Activated B cell treated with CpG ODN at 0.5 μM for 24 hours (primary cell): ENCODE measurements at regions of chr6 and their contacts with region 1.

Region 1: DNA sequence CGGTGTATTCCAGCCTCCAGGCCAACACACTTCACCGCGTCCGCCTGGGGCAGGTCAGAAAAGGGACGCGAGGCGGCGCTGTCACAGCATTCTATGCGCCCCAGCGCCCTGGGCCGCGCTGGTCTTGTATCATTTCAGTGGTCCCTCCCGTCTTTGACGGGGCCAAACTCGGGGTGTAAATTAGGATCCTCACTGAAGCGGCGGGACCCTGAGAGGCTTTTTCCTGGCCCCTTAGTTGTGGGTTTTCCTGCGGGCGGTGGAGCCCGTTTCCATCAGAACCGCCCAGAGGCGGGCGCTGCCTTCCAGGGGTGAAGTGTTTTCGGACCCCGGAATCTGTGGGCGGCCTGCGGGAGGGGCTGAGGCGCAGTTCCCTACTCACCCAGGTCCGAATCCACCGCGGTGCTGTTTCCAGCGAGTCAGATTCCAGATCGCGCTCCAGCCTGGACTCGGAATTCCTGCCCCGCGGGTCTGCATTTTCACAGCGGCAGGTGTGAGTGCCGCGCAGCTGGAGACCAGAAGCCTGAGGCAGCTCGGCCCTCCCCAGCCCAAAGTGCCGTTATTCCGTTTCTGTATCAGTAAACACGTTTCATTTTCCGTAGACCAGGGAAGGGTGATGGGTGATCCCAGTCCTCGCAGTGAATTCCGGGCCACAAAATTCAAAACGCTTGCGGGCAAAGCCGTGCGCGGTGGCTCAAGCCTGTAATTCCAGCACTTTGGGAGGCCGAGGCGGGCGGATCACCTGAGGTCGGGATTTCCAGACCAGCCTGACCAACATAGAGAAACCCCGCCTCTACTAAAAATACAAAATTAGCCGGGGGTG is 3.9 kb upstream of the MICB start:
- DNase-seq: peak; percentile 76
- ATAC-seq: peak; percentile 48
- H3K4me3 Mint-ChIP-seq: peak overlapping the region; percentile 90
- H3K27ac Mint-ChIP-seq: peak overlapping the region; percentile 92
- H3K4me1 Mint-ChIP-seq: peaks cover 54% of the 10 kb centered on the region
- H3K27me3 Mint-ChIP-seq: no peaks in the 10 kb centered on the region
- CTCF ChIP-seq: no peak

Region 2: DNA sequence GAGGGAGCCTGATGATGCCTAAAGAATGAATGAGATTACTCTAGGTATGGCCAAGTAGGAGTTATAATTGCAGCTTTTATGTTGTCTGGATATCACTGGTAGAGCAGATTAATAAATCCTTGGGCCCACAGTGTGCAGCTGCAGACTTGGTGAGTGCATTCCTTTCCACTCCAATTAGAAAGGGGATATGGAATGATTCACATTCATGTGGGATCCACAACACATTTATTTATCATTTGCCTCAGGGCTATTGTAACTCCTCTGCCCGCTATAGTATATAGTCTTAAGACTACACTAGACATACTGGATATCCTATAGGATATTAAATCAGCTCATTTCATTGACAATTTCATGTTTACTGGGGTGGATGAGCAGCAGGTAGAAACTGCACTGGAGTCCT is 1678.1 kb before region 1 on chr6:
- CTCF ChIA-PET with region 1: no interaction called
- POLR2A ChIA-PET with region 1: no interaction called
- intact Hi-C with region 1: no loop called
- DNase-seq: no peak
- ATAC-seq: no peak
- H3K4me3 Mint-ChIP-seq: no peak overlapping the region
- H3K27ac Mint-ChIP-seq: no peak overlapping the region
- H3K4me1 Mint-ChIP-seq: no peaks in the 10 kb centered on the region
- H3K27me3 Mint-ChIP-seq: peaks cover 30% of the 10 kb centered on the region
- CTCF ChIP-seq: no peak

Region 3: DNA sequence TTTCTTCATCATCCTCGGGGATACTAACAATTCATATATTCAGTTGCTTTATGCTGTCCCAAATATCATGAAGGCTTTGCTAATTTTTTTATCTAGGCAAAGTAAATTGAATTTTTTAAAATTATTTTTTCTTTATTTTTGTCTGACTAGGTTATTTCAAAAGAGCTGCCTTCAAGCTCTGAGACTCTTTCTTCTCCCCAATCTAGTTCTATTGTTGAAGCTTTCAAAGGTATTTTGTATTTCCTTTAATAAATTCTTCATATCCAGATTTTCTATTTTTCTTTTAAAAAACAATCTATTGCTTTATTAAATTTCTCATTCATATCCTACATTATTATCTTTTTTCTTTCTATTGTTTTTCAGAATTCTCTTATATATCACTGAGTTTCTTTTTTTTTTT is 1313.9 kb before region 1 on chr6:
- CTCF ChIA-PET with region 1: no interaction called
- POLR2A ChIA-PET with region 1: interaction called, 12 read pairs
- intact Hi-C with region 1: no loop called
- DNase-seq: no peak
- ATAC-seq: no peak
- H3K4me3 Mint-ChIP-seq: no peak overlapping the region
- H3K27ac Mint-ChIP-seq: no peak overlapping the region
- H3K4me1 Mint-ChIP-seq: no peaks in the 10 kb centered on the region
- H3K27me3 Mint-ChIP-seq: peaks cover 32% of the 10 kb centered on the region
- CTCF ChIP-seq: no peak

Region 4: DNA sequence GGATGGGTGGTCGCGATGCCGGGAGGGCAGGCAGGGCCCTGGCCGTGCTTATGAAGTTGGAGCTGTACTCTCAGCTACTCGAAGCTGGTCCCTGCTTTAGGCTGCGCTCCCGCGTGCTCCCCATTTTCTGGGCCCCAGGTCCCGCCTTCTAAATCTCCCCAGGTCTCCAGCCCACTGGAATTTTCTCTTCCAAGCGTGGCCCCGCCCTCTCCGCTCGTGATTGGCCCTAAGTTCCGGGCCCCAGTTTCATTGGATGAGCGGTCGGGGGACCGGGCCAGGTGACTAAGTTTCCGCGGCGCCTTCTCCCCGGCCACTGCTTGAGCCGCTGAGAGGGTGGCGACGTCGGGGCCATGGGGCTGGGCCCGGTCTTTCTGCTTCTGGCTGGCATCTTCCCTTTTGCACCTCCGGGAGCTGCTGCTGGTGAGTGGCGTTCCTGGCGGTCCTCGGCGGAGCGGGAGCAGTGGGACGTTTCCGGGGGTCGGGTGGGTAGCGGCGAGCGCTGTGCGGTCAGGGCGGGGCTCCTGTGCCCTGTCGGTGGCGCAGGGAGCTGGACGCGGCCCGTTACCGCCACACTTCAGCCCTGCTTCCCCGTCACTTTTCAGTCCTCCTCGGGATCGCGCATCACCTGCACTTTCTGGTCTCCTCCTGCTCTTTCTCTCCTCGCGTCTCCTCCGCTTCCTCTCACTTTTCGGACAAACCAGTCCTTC is 90.6 kb before region 1 on chr6 and contains the start of gene MICA:
- CTCF ChIA-PET with region 1: interaction called, 3 read pairs
- POLR2A ChIA-PET with region 1: interaction called, 28 read pairs
- intact Hi-C with region 1: loop called (anchors 5 kb)
- DNase-seq: peak; percentile 63
- ATAC-seq: peak; percentile 65
- H3K4me3 Mint-ChIP-seq: peak within 1 kb of the TSS; percentile 91
- H3K27ac Mint-ChIP-seq: peak within 1 kb of the TSS; percentile 80
- H3K4me1 Mint-ChIP-seq: peaks cover 63% of the 10 kb centered on the region
- H3K27me3 Mint-ChIP-seq: no peaks in the 10 kb centered on the region
- CTCF ChIP-seq: no peak
- total RNA-seq, gene MICA: 8.9 and 9.0 TPM in 2 replicates

Region 5: DNA sequence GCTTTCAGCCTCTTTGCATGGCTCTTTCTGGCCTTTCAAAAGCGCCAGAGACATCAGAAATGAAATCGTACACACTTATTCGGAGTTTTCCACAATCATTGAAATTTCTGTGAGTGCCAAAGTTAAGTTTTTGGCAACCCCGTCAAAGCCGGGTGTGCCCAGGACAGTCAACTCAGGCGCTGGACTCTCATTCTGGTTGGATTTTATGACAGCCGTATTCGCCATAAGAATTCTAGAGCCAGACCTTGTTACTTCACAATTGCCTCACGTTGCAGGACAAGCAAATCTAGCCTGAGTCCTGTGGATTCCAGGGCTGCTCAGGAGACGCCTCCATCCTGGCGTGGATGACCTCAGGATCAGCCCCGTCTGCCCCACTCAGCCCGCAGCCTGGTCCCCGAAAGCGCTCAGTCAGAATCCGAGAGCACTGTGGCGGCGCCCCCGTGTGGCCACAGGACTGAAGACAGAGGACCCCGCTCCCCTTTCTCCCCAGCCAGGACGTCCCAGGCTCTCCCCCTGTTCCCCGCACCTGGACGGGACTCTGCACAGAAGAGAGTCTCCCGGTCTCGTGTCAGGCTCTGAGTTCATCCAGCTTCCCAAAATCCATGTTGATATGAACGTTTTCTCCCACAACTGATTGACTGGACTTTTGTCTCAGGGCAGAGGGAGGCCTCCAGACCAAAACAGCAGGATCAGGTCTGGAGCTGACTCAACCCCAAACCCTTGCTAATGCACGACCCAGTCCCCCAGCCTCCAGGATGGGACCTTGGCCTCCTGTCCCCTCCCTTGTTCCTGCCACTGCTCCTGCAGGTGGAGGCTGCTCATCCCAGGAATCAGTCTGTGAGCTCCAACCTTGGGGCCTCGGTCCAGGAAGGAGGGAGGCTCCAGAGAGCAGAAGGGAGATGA is 52.5 kb before region 1 on chr6:
- CTCF ChIA-PET with region 1: no interaction called
- POLR2A ChIA-PET with region 1: no interaction called
- intact Hi-C with region 1: no loop called
- DNase-seq: peak; percentile 81
- ATAC-seq: peak; percentile 98
- H3K4me3 Mint-ChIP-seq: no peak overlapping the region
- H3K27ac Mint-ChIP-seq: no peak overlapping the region
- H3K4me1 Mint-ChIP-seq: peaks cover 16% of the 10 kb centered on the region
- H3K27me3 Mint-ChIP-seq: peaks cover 24% of the 10 kb centered on the region
- CTCF ChIP-seq: peak; percentile 59

Region 6: DNA sequence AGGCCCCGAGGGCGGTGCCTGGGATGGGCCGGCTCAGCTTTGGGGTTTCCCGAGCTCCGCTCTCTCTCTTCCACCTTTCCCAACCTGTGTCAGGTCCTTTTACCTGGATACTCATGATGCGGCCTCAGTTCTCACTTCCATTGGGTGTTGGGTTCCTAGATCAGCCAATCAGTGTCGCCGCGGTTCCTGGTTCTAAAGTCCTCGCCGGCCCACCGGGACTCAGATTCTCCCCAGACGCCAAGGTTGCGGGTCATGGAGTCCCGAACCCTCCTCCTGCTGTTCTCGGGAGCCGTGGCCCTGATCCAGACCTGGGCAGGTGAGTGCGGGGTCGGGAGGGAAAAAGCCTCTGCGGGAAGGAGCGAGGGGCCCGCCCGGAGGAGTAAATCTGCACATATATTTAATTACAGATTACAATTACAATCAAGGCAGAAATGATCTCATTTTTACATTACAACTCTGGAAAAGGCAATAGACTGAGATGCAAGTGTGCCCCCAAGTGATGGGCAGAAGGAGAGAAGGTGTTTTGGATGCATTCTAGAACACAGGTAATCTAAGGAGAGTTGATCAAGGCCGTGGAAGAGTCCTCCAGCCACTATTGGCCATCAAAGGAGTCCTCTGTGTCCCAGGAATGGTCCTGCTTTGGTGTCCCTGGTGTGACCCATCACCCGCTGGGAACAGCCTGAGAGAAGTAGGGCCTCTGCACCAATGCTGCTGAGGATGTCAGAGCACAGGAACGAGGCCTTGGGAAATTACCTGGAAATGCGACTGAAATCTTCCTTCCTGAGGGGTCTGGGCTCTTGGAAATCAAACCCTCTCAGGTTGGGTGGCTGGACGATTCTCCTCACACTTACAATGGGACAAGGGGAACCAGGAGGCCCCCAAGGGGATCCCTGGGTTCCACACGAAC is 30.9 kb before region 1 on chr6:
- CTCF ChIA-PET with region 1: no interaction called
- POLR2A ChIA-PET with region 1: interaction called, 15 read pairs
- intact Hi-C with region 1: loop called (anchors 5 kb)
- DNase-seq: peak; percentile 79
- ATAC-seq: peak; percentile 96
- H3K4me3 Mint-ChIP-seq: peak overlapping the region; percentile 100
- H3K27ac Mint-ChIP-seq: peak overlapping the region; percentile 98
- H3K4me1 Mint-ChIP-seq: peaks cover 61% of the 10 kb centered on the region
- H3K27me3 Mint-ChIP-seq: no peaks in the 10 kb centered on the region
- CTCF ChIP-seq: no peak